RWPE1 (cell line): ENCODE measurements at regions of chr1 and their contacts with region 1.

Region 1: GRCh38 chr1:157963713-157964112 is 29.7 kb upstream of the KIRREL1 start:
- DNase-seq: peak; percentile 71
- H3K27ac ChIP-seq: no peak overlapping the region
- CTCF ChIP-seq: peak; percentile 89

Region 2: DNA sequence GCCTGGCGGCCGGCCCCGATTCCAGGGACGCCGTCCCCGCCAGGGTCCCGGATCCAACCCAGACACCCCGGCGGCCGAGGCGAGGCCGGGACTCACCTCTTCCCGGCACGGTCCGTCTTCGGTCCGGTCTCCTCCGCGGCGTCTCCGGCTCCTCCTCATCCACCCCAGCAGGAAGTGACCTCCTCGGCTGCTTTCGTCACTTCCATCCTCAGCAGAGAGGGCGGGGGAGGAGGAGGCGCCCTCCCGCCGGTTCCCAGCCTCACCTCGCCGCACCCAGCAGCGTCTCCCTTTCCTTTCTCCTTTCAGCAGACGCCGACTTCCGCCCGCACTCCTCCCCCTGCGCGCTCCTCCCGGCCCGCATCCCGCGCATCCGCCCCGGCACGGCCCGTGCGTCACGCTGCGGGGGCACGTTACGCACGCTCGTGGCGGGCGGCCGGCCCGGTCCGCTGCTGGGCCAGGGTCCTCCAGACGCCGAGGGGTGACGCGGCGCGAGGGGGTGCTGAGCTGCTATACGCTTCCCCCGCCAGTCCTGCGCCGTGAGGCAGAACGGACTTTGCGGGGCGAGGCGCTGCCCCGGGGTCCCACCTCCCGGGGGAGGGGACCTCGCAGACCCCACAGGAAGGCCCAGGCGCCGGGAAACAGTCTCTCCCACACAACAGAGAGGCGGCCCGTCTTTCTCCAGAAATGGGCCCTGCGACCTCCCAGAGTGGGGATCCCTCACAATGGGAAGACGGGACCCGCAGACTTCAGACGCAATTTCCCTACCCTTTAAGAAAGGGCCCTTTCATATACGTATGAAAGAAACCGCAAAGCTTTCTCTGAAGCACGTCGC is 825.3 kb before region 1 on chr1 and contains the start of gene ETV3:
- CTCF ChIA-PET with region 1: no interaction called
- POLR2A ChIA-PET with region 1: no interaction called
- DNase-seq: peak; percentile 94
- H3K27ac ChIP-seq: peak within 1 kb of the TSS; percentile 89
- CTCF ChIP-seq: no peak

Region 3: GRCh38 chr1:157781048-157781447 is 182.7 kb before region 1 on chr1:
- CTCF ChIA-PET with region 1: no interaction called
- POLR2A ChIA-PET with region 1: no interaction called
- DNase-seq: no peak
- H3K27ac ChIP-seq: no peak overlapping the region
- CTCF ChIP-seq: no peak

Region 4: GRCh38 chr1:158124999-158125398 is 161.3 kb after region 1 on chr1:
- CTCF ChIA-PET with region 1: interaction called, 40 read pairs
- POLR2A ChIA-PET with region 1: no interaction called
- DNase-seq: peak; percentile 87
- H3K27ac ChIP-seq: peak overlapping the region; percentile 23; the same call in 1 of the 2 replicates
- CTCF ChIP-seq: peak; percentile 90